AG04450 (cell line): ENCODE measurements at regions of chr5 and their contacts with region 1.

Region 1: DNA sequence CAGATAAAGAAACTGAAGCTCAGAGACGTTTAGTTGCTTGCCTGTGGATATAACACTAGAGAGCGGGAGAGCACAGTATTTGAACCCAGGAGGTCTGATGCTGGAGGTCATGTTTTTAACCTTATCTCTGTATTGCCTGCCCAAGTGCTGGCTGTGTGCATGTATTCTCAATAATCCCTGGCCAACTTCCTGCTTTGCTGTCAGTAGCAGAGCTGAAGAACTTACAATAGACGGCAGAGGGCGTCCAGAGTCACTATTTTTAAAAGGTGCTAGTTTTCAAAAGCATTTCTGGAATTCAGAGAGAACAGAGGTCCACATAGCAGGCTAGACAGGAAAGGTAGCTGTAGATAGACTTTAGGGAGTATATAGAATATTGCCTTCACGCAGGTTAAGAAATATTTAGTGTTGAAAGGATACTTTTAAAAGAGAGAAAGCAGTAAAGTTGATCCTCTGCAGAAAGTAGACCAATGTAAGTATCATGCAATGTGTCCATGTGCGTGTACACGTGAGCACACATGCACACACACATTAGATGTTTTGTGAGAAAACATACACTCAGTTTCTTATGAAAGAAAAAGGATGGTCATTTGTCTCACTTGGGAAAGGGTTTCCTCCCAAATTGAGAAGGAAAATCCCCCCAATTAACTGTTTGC is 46.3 kb downstream of the PTCD2 start:
- DNase-seq: peak; percentile 61
- H3K4me3 ChIP-seq: no peak overlapping the region
- H3K27ac ChIP-seq: no peak overlapping the region
- H3K27me3 ChIP-seq: no peaks in the 10 kb centered on the region
- CTCF ChIP-seq: peak; percentile 83

Region 2: GRCh38 chr5:72355706-72356299 is 10.6 kb before region 1 on chr5:
- CTCF ChIA-PET with region 1: interaction called, 12 read pairs
- POLR2A ChIA-PET with region 1: no interaction called
- DNase-seq: no peak
- H3K4me3 ChIP-seq: no peak overlapping the region
- H3K27ac ChIP-seq: no peak overlapping the region
- H3K27me3 ChIP-seq: no peaks in the 10 kb centered on the region
- CTCF ChIP-seq: peak; percentile 32; the same call in 1 of the 2 replicates

Region 3: GRCh38 chr5:72378636-72379290 is 12.3 kb after region 1 on chr5:
- CTCF ChIA-PET with region 1: interaction called, 23 read pairs
- POLR2A ChIA-PET with region 1: no interaction called
- DNase-seq: peak; percentile 46
- H3K4me3 ChIP-seq: no peak overlapping the region
- H3K27ac ChIP-seq: no peak overlapping the region
- H3K27me3 ChIP-seq: no peaks in the 10 kb centered on the region
- CTCF ChIP-seq: no peak

Region 4: DNA sequence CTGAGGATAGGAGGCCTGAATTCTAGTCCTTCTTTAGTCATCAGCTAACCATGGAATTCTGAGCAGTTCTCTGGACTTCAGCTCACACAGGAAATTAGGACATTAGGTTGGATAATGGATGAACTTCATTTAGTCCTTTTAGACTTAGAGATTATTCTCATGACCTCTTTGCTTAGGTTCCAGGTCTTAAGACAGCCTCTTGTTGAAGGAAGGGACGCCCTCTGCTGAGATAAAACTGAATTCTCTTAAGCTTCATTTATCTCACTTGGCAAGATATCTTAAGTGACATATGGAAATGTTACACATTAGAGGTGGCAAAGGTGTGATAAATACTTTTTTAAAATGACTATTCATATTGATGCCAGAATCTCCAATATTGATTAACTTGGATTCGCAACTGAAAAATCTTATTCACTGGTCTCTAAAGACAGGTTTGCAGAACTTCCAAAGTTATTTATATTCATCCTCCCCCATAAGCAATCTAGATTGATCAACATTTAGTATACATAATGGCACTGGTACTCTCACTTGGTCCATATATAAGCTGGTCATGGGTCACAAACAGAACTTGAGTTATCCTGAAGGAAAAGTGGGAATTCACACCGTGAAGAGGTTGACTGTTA is 157.6 kb after region 1 on chr5:
- CTCF ChIA-PET with region 1: interaction called, 65 read pairs
- POLR2A ChIA-PET with region 1: no interaction called
- DNase-seq: peak; percentile 52
- H3K4me3 ChIP-seq: no peak overlapping the region
- H3K27ac ChIP-seq: no peak overlapping the region
- H3K27me3 ChIP-seq: no peaks in the 10 kb centered on the region
- CTCF ChIP-seq: peak; percentile 65